MCF 10A (cell line): ENCODE measurements at regions of chr2 and their contacts with region 1.

Region 1: GRCh38 chr2:134207564-134208209 is 46.2 kb upstream of the MGAT5 start:
- DNase-seq: peak; percentile 69
- H3K4me3 Mint-ChIP-seq: no peak overlapping the region
- H3K27ac Mint-ChIP-seq: no peak overlapping the region
- H3K4me1 Mint-ChIP-seq: peaks cover 11% of the 10 kb centered on the region
- H3K27me3 Mint-ChIP-seq: no peaks in the 10 kb centered on the region
- CTCF ChIP-seq: peak; percentile 73

Region 2: DNA sequence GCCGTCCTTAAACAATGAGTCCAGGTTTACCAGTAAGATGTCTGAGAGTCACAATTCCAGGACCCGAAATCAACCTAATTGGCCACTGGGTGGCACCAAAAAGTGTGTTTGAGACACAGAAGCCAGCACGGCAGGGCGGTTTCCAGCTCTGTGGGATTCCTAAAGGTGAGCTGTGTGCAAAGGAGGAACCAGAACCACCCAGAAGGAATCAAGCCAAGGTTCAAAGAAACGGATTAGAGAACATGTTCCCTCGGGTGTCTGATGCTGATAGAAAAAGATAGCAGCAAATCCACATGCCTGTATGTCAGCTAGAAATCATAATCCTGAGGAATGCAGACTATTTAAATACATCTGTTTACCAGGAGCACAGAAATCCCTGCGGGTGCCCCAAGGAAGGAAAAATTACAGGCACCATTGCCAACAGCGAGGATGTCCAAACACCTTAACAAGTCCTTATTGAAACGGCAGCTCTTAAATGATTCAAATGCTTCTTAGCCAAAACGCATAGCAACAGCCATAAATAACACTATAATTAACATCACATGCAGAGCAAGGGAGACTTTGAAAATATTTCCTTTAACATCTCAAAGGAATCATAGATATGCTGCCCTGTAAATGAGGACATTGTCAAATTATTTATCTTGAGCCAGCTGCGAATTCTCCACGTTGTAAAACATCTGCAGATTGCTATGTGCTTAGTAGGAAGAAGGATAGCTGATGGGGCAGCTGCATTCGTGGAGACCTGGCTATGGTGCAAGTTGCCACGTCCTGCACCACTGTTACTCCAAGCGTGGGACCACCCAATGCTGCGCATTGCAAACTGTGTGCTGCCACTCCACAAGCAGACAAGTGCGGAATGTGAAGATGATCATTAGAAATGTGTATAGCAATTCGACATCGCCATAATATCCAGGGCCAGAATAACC is 320.7 kb before region 1 on chr2:
- CTCF ChIA-PET with region 1: interaction called, 16 read pairs
- POLR2A ChIA-PET with region 1: no interaction called
- intact Hi-C with region 1: loop called (anchors 5 kb)
- DNase-seq: peak; percentile 87
- H3K4me3 Mint-ChIP-seq: no peak overlapping the region
- H3K27ac Mint-ChIP-seq: no peak overlapping the region
- H3K4me1 Mint-ChIP-seq: peaks cover 7% of the 10 kb centered on the region
- H3K27me3 Mint-ChIP-seq: peaks cover 14% of the 10 kb centered on the region
- CTCF ChIP-seq: peak; percentile 52

Region 3: GRCh38 chr2:134218930-134219658 is 11.4 kb after region 1 on chr2:
- CTCF ChIA-PET with region 1: interaction called, 18 read pairs
- POLR2A ChIA-PET with region 1: no interaction called
- intact Hi-C with region 1: no loop called
- DNase-seq: no peak
- H3K4me3 Mint-ChIP-seq: no peak overlapping the region
- H3K27ac Mint-ChIP-seq: no peak overlapping the region
- H3K4me1 Mint-ChIP-seq: peaks cover 18% of the 10 kb centered on the region
- H3K27me3 Mint-ChIP-seq: no peaks in the 10 kb centered on the region
- CTCF ChIP-seq: no peak